Right ventricle myocardium inferior (tissue), 1 donor: ENCODE measurements at regions of chr16 and their contacts with region 1.

Region 1: GRCh38 chr16:70691223-70692129 is 5.6 kb upstream of the MTSS2 start:
- DNase-seq: peak; percentile 86
- ATAC-seq: peak; percentile 15

Region 2: DNA sequence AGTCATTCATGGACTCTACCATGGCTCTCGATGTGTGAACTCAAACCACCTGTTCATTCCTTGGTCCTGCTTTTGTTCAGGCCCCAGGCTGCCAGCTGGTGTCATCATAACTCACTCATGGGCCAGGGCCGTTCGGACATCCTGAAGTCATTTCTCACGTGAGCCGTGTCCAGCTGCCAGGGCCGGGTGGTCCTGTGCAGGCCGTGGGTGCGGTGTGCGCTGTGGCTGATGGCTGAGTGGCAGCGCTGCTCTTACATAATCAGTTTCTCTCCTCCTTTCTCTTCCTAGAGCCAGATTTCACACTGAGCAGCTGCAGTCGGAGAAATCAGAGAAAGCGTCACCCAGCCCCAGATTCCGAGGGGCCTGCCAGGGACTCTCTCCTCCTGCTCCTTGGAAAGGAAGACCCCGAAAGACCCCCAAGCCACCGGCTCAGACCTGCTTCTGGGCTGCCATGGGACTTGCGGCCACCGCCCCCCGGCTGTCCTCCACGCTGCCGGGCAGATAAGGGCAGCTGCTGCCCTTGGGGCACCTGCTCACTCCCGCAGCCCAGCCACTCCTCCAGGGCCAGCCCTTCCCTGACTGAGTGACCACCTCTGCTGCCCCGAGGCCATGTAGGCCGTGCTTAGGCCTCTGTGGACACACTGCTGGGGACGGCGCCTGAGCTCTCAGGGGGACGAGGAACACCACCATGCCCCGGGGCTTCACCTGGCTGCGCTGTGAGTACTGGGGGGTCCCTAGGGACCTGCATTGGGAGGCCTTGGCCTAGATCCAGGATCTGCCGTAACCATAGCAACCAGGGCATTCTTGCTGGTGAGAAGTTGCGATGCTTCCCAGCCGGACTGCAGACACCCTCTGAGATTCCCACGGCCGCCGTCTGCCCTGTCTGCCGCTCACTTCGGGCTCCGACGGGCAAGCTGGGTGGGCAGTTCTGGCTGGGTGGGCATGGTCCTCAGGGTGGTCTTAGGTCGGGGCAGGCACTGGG is 44.9 kb before region 1 on chr16 and contains the start of gene IL34:
- intact Hi-C with region 1: no loop called
- DNase-seq: no peak
- ATAC-seq: peak; percentile 76
- total RNA-seq, gene IL34: 2.0 TPM

Region 3: DNA sequence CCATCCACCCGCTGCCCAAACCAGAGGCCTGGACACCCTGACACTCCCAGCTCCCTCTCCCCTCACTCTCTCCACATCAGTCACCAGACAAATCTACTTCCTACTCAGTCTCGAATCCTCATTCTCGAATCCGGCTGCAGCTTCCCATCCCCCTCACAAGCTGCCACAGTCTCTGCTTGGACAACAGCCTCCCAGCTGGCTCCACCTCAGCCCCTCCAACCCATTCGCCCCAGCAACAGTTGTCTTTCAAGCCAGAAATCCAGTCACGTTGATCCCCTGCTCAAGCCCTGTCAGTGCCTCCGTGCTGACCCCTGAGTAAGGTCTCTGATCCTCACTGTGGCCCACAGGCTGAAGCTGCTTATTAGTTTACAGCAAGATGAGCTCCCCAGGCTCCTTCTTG is 38.6 kb after region 1 on chr16:
- intact Hi-C with region 1: loop called (anchors 2 kb)
- DNase-seq: no peak
- ATAC-seq: no peak

Region 4: GRCh38 chr16:70737377-70738082 is 46.1 kb after region 1 on chr16:
- intact Hi-C with region 1: loop called (anchors 2 kb)
- DNase-seq: peak; percentile 86
- ATAC-seq: peak; percentile 75

Region 5: DNA sequence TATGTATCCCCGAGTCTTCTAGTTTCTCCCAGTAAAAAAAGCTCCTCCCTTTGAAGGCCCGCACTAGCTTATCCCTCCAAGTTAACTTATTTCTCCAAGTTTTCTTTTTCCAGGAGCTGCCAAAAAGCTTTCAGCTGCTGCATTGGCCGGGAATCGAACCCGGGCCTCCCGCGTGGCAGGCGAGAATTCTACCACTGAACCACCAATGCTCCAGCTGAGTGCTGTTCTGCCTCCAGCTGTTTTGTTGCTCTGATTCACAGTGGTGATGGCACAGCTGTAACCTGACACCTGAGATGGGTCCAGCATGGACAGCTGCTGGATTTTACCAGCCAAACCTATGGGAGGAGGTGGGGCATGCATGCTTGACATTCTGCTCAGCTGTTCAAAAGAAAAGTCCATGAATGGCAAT is 87.4 kb after region 1 on chr16:
- intact Hi-C with region 1: no loop called
- DNase-seq: no peak
- ATAC-seq: peak; percentile 81